ENCODE measurements at regions of chr17 and their contacts with region 1.

Region 1: DNA sequence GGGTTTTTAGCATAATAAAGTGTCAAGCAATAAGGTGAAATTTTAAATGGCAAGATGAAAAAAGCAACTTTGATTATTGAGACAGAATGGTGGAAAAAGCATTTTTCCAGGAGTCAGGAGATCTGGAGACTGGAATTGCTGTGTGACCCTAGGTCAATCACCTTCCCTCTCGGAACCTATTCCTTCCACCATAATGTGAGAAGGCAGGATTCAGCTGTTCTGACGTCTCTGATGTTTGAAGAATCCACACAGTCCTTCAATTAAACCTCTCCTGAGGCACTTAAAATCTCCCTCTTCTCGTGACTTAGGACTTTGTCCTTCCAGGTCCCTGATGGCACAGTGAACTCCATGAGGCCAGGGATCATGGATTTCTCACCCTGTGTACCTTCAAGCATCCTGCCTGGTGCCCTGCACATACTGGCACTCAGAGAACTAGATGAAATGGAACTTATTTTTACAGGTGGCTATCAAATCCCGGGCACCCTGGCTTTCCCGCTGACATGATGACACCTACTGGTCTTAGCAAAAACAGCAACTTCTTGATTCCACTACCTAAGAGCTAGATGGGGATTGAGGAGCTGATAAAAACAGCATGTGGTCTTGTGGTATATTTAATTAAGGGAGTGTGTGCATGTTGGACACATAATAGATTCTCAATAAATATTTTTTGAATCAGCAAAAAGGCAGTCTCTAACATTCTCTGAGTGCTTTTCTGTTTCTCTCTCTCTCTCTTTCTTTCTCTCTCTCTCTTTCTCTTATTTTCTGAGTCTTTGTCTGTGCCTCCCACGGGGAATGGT is 2.3 kb upstream of the CCDC182 start:
- DNase-seq: no peak
- ATAC-seq: peak; percentile 42 to 67

Region 2: GRCh38 chr17:57130761-57131461 is 616.5 kb before region 1 on chr17:
- intact Hi-C with region 1: loop called (anchors 5 kb)
- DNase-seq: peak; percentile 86
- ATAC-seq: peak; percentile 94

Region 3: DNA sequence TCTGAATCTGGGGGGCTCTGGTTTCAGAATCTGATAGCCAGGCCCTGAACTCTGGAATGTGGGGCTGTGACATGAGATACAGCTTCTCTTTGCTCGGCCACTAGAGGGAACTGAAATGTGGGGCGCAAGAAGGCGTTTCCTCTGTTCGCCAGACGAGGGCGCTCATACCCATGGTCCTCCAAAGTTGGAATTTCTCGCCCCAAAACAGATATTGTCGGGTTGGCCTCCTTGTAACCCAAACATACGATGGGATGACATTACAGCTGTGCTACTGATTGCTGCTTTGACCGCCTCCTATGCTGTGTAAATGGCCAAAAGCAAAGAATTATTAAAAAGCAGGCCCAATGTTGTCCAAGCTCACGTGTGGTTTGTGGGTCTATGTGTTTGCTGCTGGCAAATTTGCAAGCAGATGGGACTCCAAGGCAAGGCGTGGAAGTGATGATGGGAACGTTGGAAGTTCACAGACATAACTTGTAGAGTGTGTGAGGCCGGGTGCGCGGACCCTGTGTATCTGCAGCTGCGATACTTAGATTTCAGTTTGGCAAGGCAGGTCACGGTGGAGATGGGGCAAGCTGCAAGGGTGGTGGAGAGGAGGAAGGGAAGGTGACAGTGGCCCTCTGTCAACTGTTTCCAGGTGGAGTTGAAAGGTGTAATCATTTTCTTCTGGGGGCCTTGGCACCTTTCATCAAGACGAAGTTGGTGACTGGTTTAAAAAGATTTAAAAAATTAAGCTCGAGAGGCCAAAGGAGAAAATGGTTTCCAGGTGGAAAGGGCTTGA is 504.1 kb before region 1 on chr17:
- intact Hi-C with region 1: loop called (anchors 5 kb)
- DNase-seq: peak; percentile 68
- ATAC-seq: peak; percentile 57 to 83

Region 4: GRCh38 chr17:57422574-57423164 is 324.8 kb before region 1 on chr17:
- intact Hi-C with region 1: no loop called
- DNase-seq: no peak
- ATAC-seq: peak; percentile 84 to 93

Region 5: GRCh38 chr17:57597531-57598453 is 149.6 kb before region 1 on chr17:
- intact Hi-C with region 1: loop called in 1 of 2 experiments (anchors 5 kb)
- DNase-seq: peak; percentile 79
- ATAC-seq: peak; percentile 66 to 69

Region 6: DNA sequence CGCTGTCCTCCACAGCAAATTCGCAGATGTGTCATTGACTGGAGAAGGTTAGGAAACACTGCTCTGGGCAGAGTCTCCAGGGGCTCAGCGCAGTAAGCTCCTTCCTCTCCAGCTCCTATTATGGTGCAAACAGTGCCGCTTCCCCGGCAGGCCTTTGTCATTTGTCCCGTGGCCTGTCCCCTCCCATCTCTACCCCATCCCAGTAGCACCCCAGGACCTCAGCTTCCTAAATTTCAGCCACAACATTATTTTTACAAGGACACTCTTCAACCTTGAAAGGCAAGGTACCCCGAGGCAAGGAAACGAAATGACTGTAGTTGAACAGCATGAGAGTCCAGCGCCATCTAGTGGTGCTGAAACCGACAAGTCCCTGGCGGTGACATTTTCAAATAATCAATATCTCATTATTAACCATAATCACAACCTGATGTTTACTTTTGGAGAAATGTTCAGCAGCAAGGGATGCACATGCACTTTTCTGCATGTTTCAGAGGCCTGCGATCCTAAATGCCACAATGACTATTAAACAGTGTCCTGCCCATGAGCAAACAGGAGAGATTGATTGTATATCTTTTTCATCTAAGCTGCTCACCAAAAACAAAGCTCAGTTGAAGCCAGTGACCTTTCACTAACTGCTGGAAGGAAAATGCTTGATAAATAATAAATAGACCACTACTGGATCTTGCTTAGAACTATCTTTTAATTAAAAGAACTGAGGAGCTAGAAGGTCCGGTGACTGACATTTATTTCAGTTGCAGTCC is 85.9 kb after region 1 on chr17:
- intact Hi-C with region 1: loop called in 1 of 2 experiments (anchors 5 kb)
- DNase-seq: peak; percentile 82
- ATAC-seq: peak; percentile 91 to 92

Region 7: GRCh38 chr17:57927048-57927723 is 179.8 kb after region 1 on chr17:
- intact Hi-C with region 1: no loop called
- DNase-seq: peak; percentile 66
- ATAC-seq: peak; percentile 63 to 83